IMR-90 (cell line): ENCODE measurements at regions of chr2 and their contacts with region 1.

Region 1: DNA sequence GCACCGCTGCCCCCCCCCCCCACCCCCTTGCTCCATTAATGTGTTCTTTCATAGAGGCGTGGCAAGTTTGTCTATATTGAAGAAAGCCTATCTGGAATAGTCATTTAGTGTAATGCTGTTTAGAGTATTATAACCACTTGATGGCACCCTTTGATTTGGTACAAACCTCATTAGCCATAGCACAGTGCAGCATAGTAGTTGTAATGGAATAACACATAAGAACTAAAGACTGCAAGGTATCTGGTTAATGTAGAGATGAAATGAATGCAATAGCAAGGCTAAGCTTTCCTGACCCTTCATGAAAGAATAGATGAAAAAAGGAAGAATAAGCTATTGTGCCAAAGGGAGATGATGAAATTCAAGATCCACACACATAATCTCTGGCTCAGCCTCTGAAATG is 81.9 kb downstream of the EHBP1 start:
- DNase-seq: peak; percentile 51
- ATAC-seq: peak; percentile 66
- H3K4me3 ChIP-seq: no peak overlapping the region
- H3K27ac ChIP-seq: no peak overlapping the region
- H3K4me1 ChIP-seq: peaks cover 9% of the 10 kb centered on the region
- H3K27me3 ChIP-seq: no peaks in the 10 kb centered on the region
- CTCF ChIP-seq: peak; percentile 50
- POLR2A ChIP-seq: no peak
- RAD21 ChIP-seq: peak; percentile 65

Region 2: DNA sequence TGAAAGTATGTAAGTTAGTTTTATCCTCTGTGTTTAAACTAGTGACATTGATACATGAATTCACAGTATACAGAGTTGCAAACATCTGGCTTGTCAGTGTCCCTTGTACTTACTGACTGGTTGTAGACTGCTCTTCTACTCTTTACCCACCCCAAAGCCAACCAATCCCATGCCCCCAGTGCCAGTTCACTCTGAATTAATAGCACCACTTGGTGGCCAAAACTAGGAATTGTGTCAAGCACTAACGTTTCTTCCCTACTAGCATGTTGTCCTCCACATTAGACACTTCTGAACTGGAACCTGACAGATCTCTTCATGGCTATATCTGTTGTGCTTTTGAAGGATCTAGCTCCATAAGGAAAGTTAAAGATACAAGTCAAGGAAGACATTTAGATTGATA is 236.1 kb after region 1 on chr2:
- CTCF ChIA-PET with region 1: interaction called, 3 read pairs
- POLR2A ChIA-PET with region 1: no interaction called
- dilution Hi-C with region 1: no loop called
- in situ Hi-C with region 1: loop called (anchors 10 kb)
- intact Hi-C with region 1: loop called (anchors 2 kb)
- DNase-seq: peak; percentile 40
- ATAC-seq: peak; percentile 71; the same call in 1 of the 2 replicates
- H3K4me3 ChIP-seq: no peak overlapping the region
- H3K27ac ChIP-seq: no peak overlapping the region
- H3K4me1 ChIP-seq: no peaks in the 10 kb centered on the region
- H3K27me3 ChIP-seq: no peaks in the 10 kb centered on the region
- CTCF ChIP-seq: peak; percentile 45
- POLR2A ChIP-seq: no peak
- RAD21 ChIP-seq: peak; percentile 50

Region 3: DNA sequence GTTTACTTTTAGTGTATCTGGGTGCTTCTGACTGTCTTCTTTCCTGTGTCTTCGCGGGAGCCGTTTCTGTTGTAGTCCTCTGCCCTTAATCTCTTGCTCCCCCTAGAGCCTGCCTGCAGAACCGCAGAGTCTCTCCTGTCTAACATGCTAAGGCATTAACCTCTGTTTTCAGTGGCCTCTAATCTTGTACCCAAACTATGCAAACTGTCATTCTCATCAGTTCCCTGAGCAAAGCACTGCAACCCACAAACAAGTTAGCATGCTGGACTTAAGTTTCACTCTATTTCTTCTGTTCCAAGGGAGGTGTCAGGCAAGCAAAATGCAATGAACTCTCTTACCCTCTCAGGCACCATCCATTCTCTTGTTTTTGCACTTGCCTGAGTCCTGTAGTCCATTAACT is 401.6 kb after region 1 on chr2:
- CTCF ChIA-PET with region 1: no interaction called
- POLR2A ChIA-PET with region 1: no interaction called
- dilution Hi-C with region 1: no loop called
- in situ Hi-C with region 1: loop called (anchors 25 kb)
- intact Hi-C with region 1: loop called (anchors 1 kb)
- DNase-seq: peak; percentile 44
- ATAC-seq: peak; percentile 94
- H3K4me3 ChIP-seq: no peak overlapping the region
- H3K27ac ChIP-seq: no peak overlapping the region
- H3K4me1 ChIP-seq: no peaks in the 10 kb centered on the region
- H3K27me3 ChIP-seq: no peaks in the 10 kb centered on the region
- CTCF ChIP-seq: peak; percentile 65
- POLR2A ChIP-seq: no peak
- RAD21 ChIP-seq: peak; percentile 66

Region 4: DNA sequence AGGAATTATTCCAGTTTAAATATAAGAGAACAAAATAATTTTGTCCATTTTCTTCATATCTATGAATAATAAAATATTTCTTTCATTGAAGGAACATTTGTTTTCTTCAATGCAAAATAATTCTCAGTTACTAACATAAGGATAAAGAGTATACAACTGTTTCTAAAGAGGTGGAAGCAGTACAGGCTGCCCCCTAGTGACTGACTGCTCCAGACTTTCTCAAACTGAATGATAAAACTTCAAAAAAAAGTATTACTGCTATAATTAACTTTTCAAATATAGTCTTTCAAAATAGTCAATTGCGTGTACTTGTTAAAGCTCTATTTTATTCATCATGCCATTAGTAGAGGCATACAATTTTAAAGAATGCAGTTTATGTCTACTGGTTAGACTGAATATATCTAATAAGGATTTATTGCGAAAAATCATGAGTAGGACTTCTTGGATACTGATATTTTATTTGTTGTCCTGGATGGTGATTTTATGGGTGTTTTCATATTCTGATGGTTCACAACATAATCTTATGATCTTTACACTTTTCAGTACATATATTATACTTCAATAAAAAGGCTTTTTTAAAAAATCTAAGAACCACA is 700.8 kb after region 1 on chr2:
- CTCF ChIA-PET with region 1: no interaction called
- POLR2A ChIA-PET with region 1: no interaction called
- dilution Hi-C with region 1: no loop called
- in situ Hi-C with region 1: loop called (anchors 25 kb)
- intact Hi-C with region 1: loop called (anchors 5 kb)
- DNase-seq: peak; percentile 46
- ATAC-seq: peak; percentile 74; the same call in 1 of the 2 replicates
- H3K4me3 ChIP-seq: no peak overlapping the region
- H3K27ac ChIP-seq: no peak overlapping the region
- H3K4me1 ChIP-seq: no peaks in the 10 kb centered on the region
- H3K27me3 ChIP-seq: no peaks in the 10 kb centered on the region
- CTCF ChIP-seq: peak; percentile 69
- POLR2A ChIP-seq: no peak
- RAD21 ChIP-seq: peak; percentile 68

Region 5: DNA sequence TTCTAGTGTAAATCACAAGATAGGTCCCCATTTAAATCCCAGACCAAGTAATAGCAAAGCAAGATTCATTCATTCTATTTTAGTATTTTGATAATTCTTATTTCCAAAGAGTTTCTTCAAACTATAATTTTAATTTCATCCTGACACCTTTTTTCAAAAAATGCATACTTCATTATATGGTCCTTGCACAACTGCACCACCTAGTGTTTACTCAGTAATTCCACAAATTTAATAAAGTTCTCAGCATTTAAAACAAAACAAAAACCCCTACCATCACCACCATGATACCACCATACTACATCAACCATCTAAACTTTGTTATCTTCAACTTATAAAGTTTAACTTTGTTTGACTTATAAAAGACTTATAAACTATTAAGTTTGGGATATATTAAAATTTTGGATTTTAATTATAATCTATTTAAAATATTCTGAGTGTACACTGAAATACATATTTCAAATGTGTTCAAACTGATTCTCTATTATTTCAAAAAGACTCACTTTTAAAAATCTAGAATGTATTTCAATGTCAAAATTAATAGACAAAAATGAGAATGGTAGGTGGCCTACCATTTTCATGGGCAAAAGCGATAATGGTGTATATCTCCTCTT is 756.7 kb after region 1 on chr2:
- CTCF ChIA-PET with region 1: no interaction called
- POLR2A ChIA-PET with region 1: no interaction called
- dilution Hi-C with region 1: no loop called
- in situ Hi-C with region 1: no loop called
- intact Hi-C with region 1: loop called (anchors 10 kb)
- DNase-seq: peak; percentile 2
- ATAC-seq: 0 out of 2 replicates have a peak, but pooled peaks have one; percentile 37
- H3K4me3 ChIP-seq: no peak overlapping the region
- H3K27ac ChIP-seq: no peak overlapping the region
- H3K4me1 ChIP-seq: no peaks in the 10 kb centered on the region
- H3K27me3 ChIP-seq: no peaks in the 10 kb centered on the region
- CTCF ChIP-seq: peak; percentile 49
- POLR2A ChIP-seq: no peak
- RAD21 ChIP-seq: peak; percentile 34